ENCODE measurements at regions of chr4 and their contacts with region 1.

Region 1: GRCh38 chr4:98995183-98996055 is at the start of gene METAP1:
- DNase-seq: peak; percentile 90
- ATAC-seq: peak; percentile 81
- H3K4me3 ChIP-seq: peak within 1 kb of the TSS; percentile 94
- H3K27ac ChIP-seq: peak within 1 kb of the TSS; percentile 56
- H3K4me1 ChIP-seq: peaks cover 20% of the 10 kb centered on the region
- H3K27me3 ChIP-seq: no peaks in the 10 kb centered on the region
- CTCF ChIP-seq: peak; percentile 67
- total RNA-seq, gene METAP1: 53.9 and 54.8 TPM in 2 replicates

Region 2: DNA sequence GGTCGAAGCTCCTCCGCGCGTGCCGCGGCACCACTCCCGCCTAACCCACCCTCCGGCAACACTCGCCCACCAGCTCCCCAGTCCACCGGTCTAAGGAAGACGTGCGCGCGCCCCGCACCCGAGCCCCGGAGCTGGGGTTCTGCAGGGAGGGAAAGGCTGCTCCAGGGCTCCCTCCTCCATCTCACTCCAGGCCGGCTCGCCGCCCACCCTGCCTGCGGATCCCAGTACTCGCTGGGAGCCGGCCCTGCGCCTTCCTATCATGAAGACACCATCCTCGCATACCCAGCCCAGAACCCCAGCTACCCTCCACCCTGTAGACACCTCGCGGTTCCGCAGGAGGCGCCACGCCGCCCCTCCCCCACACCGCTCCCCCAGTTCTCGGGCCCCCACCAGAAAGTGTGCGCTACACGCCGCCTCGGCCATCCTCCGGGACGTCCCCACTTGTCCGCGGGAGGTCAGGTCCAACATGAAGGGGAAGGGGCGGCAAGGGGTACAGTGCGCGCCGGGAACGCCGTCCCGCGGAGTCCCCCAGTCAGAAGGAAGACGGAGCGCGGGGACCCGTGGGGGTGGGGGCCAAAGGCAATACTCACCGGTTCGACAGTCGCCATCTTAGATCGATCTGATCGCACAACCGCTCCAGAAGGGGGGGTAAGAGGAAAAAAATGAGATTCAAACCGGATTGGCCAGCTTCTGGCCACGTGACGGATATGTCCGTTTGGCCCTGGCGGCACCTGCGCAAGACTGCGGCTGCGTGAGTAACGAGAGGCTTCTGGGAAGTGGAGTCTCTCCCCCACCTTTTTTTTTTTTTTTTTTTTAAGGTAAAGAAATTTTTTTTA is 66.7 kb before region 1 on chr4 and contains the start of gene EIF4E:
- CTCF ChIA-PET with region 1: interaction called, 13 read pairs
- POLR2A ChIA-PET with region 1: interaction called, 3 read pairs
- intact Hi-C with region 1: no loop called
- DNase-seq: peak; percentile 96
- ATAC-seq: peak; percentile 62
- H3K4me3 ChIP-seq: peak within 1 kb of the TSS; percentile 92
- H3K27ac ChIP-seq: peak within 1 kb of the TSS; percentile 98
- H3K4me1 ChIP-seq: peaks cover 17% of the 10 kb centered on the region
- H3K27me3 ChIP-seq: no peaks in the 10 kb centered on the region
- CTCF ChIP-seq: no peak
- total RNA-seq, gene EIF4E: 110 and 134 TPM in 2 replicates

Region 3: DNA sequence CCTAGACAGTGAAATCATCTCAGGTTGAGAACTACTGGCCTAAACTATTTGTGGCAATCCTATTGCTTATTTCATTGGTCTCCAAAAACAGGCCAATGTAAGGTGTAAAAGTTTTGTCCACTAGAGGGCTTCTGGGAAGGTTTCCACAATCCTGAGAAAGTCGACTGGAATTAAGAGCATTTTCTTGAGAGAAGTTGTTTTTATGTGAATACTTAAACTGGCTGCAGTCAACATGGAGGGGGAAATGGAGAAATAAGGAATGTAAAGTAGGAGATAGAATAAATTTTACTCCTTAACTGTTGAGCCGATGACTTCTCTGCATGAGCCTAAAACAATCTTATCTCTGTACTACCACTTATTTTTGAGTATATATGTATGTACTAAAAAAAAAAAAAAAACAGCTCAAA is 55.5 kb before region 1 on chr4:
- CTCF ChIA-PET with region 1: no interaction called
- POLR2A ChIA-PET with region 1: no interaction called
- intact Hi-C with region 1: loop called (anchors 1 kb)
- DNase-seq: peak; percentile 83
- ATAC-seq: peak; percentile 60
- H3K4me3 ChIP-seq: no peak overlapping the region
- H3K27ac ChIP-seq: no peak overlapping the region
- H3K4me1 ChIP-seq: peaks cover 6% of the 10 kb centered on the region; the same call in 1 of the 2 replicates
- H3K27me3 ChIP-seq: no peaks in the 10 kb centered on the region
- CTCF ChIP-seq: peak; percentile 74

Region 4: DNA sequence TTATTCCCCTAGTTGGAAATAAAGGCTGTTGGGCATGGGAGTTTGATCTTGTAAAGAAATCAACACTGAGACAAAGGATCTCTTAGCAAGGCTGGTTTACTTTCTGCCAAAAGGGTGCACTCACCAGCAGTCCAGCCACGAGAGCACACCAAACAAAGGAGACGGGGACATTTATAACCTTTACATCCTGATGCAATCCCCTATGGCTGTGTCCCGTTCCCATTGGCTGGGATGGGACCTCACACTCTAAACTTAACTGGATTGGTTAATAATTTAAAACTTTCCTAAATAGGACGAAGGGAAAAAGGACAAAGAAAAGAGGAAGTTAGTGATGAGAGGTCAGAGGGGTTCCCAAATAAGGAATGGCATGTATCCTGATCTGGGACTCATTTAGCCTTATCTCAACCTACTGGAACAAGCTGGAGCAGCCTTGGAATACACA is 18.0 kb after region 1 on chr4:
- CTCF ChIA-PET with region 1: no interaction called
- POLR2A ChIA-PET with region 1: no interaction called
- intact Hi-C with region 1: no loop called
- DNase-seq: no peak
- ATAC-seq: no peak
- H3K4me3 ChIP-seq: no peak overlapping the region
- H3K27ac ChIP-seq: no peak overlapping the region
- H3K4me1 ChIP-seq: no peaks in the 10 kb centered on the region
- H3K27me3 ChIP-seq: no peaks in the 10 kb centered on the region
- CTCF ChIP-seq: no peak

Region 5: DNA sequence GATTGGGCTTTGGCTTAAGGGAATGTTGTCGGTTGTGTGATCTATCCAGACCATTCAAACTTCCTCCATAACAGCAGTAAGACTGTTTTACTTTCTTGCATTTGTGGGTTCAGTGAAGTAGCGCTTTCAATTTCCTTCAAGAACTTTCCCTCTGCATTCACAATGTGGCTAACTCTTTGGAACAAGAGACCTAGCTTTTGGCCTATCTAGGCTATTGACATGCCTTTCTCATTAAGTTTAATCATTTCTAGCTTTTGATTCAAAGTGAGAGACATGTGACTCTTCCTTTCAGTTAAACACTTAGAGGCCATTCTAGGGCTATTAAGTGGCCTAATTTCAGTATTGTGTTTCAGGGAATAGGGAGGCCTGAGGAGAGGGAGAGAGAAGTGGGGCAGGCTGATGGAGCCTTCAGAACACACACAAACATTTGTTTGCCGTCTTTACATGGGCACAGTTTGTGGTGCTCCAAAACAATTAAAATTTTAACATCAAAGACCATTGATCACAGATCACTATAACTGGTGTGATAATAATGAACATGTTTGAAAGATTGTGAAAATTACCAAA is 59.1 kb after region 1 on chr4:
- CTCF ChIA-PET with region 1: interaction called, 28 read pairs
- POLR2A ChIA-PET with region 1: no interaction called
- intact Hi-C with region 1: loop called (anchors 1 kb)
- DNase-seq: no peak
- ATAC-seq: no peak
- H3K4me3 ChIP-seq: no peak overlapping the region
- H3K27ac ChIP-seq: no peak overlapping the region
- H3K4me1 ChIP-seq: peaks cover 14% of the 10 kb centered on the region
- H3K27me3 ChIP-seq: no peaks in the 10 kb centered on the region
- CTCF ChIP-seq: no peak

Region 6: DNA sequence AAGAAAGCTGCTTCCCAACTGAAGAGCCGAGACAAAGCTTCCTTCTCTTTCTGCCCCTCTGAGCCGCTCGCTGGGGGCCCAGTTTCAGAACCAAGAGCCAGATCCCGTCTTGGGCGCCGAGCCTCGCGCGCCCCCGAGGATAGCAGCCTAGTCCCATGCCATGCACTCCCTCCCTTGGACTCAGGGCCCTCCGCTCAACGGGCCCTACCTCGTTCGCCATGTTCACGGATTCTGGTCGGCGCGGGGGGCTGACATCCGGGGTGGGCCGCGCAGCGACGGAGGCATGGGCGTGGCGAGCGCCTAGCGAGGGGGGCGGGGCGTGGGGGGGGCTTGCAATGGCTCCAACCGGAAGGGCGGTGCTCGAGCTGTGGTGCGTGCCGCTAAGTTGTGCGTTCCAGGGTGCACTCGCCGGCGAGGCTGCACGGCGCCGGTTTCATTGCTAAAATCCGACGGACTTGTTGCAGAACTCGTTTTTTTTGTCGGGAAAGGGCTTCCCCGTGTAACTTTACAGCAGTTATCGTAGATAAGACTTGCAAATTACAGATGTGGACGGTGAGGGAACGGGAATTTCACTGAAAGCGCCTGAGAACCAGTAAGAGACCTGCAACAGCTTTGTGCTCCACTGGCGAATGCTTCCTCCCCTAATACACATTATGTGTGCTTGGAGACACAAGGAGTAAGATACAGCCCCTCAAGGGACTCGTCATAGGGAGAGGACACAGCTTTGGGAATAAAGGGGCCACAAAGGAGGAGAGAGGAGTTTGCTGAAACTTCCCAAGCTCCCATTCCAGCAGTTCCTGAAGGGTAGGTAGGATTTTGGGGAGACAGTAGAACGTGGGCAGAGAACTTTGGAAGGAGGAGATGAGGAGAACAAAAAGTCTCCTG is 93.3 kb after region 1 on chr4 and contains the start of gene ADH5:
- CTCF ChIA-PET with region 1: interaction called, 3 read pairs
- POLR2A ChIA-PET with region 1: no interaction called
- intact Hi-C with region 1: loop called (anchors 1 kb)
- DNase-seq: peak; percentile 71
- ATAC-seq: peak; percentile 85
- H3K4me3 ChIP-seq: peak within 1 kb of the TSS; percentile 91
- H3K27ac ChIP-seq: peak within 1 kb of the TSS; percentile 53
- H3K4me1 ChIP-seq: peaks cover 5% of the 10 kb centered on the region; the same call in 1 of the 2 replicates
- H3K27me3 ChIP-seq: no peaks in the 10 kb centered on the region
- CTCF ChIP-seq: no peak
- total RNA-seq, gene ADH5: 83.1 and 94.5 TPM in 2 replicates

Region 7: DNA sequence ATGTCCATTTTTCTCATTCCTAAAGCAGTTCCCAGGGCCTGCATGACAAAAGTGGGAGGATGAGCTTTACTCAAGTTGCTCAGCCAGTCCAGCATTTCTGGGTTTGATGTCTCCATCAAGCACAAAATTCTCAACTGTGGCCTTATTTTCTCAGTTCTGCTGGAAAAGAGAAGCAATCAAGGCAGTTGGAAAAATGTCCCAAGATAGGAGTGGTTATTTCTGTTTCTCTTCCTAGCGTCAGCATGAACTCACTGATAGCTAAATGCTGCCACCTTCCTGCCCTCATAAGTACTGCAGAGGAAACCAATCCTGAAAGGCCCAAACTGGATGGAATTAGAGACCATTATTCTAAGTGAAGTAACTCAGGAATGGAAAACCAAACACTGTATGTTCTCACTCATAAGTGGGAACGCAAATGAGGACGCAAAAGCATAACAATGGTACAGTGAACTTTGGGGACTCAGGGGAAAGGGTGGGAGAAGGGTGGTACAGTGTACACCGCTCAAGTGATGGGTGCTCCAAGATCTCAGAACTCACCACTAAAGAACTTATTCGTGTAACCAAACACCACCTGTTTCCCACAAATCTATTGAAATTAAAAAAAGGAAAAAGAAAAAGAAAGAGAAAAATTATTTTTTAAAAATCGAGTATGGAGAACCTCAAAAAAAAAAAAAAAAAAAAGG is 410.2 kb after region 1 on chr4:
- CTCF ChIA-PET with region 1: interaction called, 4 read pairs
- POLR2A ChIA-PET with region 1: no interaction called
- intact Hi-C with region 1: loop called (anchors 1 kb)
- DNase-seq: peak; percentile 83
- ATAC-seq: peak; percentile 61
- H3K4me3 ChIP-seq: no peak overlapping the region
- H3K27ac ChIP-seq: peak overlapping the region; percentile 69; the same call in 1 of the 2 replicates
- H3K4me1 ChIP-seq: peaks cover 17% of the 10 kb centered on the region
- H3K27me3 ChIP-seq: no peaks in the 10 kb centered on the region
- CTCF ChIP-seq: peak; percentile 85

Measured in PC-3 (cell line).